Posterior cingulate gyrus (tissue), 11 donors: ENCODE measurements at regions of chr6 and their contacts with region 1.

Region 1: DNA sequence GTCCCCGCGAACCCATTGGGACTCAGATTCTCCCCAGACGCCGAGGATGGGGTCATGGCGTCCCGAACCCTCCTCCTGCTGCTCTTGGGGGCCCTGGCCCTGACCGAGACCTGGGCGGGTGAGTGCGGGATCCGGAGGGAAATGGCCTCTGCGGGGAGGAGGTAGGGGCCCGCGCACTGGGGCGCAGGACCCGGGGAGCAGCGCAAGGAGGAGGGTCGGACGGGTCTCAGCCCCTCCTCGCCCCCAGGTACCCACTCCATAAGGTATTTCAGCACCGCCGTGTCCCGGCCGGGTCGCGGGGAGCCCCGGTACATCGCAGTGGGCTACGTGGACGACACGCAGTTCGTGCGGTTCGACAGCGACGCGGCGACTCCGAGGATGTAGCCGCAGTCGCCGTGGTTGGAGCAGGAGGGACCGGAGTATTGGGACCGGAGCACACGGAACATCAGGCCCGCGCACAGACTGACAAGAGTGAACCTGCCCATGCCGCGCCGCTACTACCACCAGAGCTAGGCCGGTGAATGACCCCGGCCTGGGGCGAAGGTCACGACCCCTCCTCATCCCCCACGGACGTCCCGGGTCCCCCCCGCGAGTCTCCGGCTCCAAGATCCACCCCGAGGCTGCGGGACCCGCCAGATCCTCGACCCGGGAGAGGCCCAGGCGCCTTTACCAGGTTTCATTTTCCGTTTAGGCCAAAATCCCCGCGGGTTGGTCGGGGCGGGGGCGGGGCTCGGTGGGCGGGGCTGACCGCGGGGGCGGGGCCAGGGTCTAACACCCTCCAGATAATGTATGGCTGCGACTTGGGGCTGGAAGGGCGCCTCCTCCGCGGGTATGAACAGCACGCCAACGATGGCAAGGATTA is 15.7 kb upstream of the HLA-A start:
- DNase-seq: peak in 7 of 10 donors; percentile 17 to 83 (median 36)

Region 2: GRCh38 chr6:29887819-29888776 is 38.5 kb before region 1 on chr6:
- intact Hi-C with region 1: loop called (anchors 5 kb)
- DNase-seq: peak in 8 of 10 donors; percentile 31 to 90 (median 44)

Region 3: GRCh38 chr6:30311101-30311500 is 384.5 kb after region 1 on chr6:
- intact Hi-C with region 1: no loop called
- DNase-seq: no peak

Region 4: DNA sequence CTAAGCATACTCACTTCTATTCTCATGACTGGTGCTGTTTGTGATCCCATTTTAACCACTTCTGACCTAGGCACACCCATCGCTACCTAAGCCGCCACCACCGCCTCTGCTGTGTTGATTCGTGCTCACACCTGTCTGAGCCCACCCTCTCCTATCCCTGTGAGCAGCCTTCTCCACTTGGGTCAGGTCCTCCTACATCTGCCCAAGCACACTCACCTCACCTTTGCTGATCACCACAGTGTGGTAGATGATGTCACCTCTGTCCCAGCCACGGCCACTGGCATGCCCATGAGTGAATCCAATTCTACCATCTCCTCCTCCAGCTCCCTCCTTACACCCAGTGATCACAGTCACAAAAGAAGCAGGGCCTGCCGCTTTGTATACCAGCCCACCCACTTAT is 1104.5 kb after region 1 on chr6:
- intact Hi-C with region 1: no loop called
- DNase-seq: no peak